HepG2 (cell line): ENCODE measurements at regions of chr7 and their contacts with region 1.

Region 1: DNA sequence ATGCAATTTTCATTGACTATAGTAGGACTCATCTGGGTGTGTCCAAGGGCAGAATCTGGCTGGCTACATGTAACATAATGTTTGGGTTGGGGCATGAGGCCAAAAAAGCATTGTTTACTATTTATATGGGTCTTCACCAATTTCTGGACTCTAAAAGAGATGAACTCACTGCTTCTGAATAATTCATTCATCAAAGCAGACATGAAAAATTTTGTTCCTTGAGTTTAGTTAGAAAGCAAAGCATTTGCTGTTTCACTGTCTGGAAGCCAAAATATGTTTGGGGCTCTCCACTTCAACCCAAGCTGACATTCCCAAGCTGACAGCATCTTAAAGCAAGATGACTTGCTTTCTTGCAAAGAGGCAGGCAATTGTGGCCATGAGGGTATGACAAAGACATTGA is 670.6 kb downstream of the SUGCT start:
- DNase-seq: no peak
- ATAC-seq: no peak
- H3K4me3 ChIP-seq: no peak overlapping the region
- H3K27ac ChIP-seq: no peak overlapping the region
- H3K4me1 ChIP-seq: no peaks in the 10 kb centered on the region
- H3K27me3 ChIP-seq: no peaks in the 10 kb centered on the region
- CTCF ChIP-seq: no peak
- EP300 ChIP-seq: no peak
- POLR2A ChIP-seq: no peak
- RAD21 ChIP-seq: no peak

Region 2: GRCh38 chr7:40775877-40776276 is 29.5 kb before region 1 on chr7:
- CTCF ChIA-PET with region 1: no interaction called
- POLR2A ChIA-PET with region 1: no interaction called
- in situ Hi-C with region 1: no loop called
- intact Hi-C with region 1: loop called (anchors 1 kb)
- DNase-seq: no peak
- ATAC-seq: no peak
- H3K4me3 ChIP-seq: no peak overlapping the region
- H3K27ac ChIP-seq: no peak overlapping the region
- H3K4me1 ChIP-seq: peaks cover 9% of the 10 kb centered on the region
- H3K27me3 ChIP-seq: no peaks in the 10 kb centered on the region
- CTCF ChIP-seq: no peak
- EP300 ChIP-seq: no peak
- POLR2A ChIP-seq: no peak
- RAD21 ChIP-seq: no peak

Region 3: DNA sequence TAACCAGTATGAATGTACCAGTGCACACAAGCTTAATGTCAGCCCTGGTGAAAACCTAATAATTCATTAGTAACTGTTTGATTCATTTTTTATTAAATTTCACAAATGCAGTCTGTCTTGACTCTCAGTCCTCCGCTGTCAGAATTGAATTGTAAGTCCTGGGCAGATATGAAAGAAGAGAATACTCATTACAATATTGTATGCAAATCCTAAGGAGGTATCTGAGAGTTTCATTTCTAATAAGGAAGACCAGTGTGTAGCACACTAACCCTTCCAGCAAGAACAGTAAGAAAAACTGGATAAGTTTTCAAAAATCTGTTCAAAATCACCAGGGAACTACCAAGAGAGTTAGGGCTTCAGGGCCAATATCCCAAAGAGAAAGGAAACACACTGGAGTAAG is 18.5 kb before region 1 on chr7:
- CTCF ChIA-PET with region 1: no interaction called
- POLR2A ChIA-PET with region 1: no interaction called
- in situ Hi-C with region 1: no loop called
- intact Hi-C with region 1: no loop called
- DNase-seq: no peak
- ATAC-seq: no peak
- H3K4me3 ChIP-seq: no peak overlapping the region
- H3K27ac ChIP-seq: no peak overlapping the region
- H3K4me1 ChIP-seq: no peaks in the 10 kb centered on the region
- H3K27me3 ChIP-seq: no peaks in the 10 kb centered on the region
- CTCF ChIP-seq: no peak
- EP300 ChIP-seq: no peak
- POLR2A ChIP-seq: no peak
- RAD21 ChIP-seq: no peak